Heart right ventricle (tissue), 16 donors: ENCODE measurements at regions of chr14 and their contacts with region 1.

Region 1: DNA sequence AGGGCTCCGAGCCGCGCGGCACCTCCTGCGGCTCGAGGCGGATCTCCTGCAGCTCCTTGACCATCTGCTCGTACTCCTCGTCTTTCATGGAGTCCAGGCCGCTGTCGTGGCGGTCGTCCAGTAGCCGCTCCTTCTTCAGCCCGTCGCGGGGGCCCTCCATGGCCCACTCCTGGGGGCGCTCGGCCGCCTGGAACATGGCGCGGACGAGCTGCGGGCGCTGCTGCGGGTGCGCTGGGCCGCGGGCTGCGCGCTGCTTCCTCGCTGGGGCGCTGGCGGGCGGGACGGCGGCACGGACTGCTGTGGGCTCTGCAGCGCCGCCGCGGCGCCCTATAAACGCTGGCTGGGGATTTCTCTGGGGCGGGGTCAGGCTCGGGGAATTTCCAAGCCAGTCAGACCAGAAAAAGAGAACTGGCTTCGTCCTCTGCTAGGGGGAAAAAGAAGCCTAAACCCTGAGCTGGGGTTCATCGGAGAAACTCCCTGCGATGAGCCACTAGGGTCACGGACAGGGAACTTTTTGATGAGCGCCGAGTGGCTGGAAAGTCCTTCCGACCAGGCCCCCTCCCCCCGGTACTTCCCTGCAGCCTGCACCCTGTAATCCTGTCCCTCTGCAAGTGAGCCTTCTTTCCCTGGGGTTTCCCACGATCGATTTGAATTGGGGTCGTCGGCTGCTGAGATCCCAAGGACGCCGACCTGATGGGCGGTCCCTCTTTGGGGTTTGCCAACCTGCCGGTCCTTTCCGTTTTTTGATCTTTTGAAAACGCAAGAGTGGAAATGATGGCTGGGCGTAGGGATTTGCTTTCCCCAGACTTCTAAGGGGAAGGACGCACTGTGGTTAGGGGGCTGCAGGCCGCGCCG is at the start of gene NFKBIA:
- DNase-seq: peak; percentile 92 to 94
- ATAC-seq: peak; percentile 67 to 80 (median 73)
- H3K4me3 ChIP-seq: peak within 1 kb of the TSS; percentile 64 to 93 (median 80)
- H3K27ac ChIP-seq: peak within 1 kb of the TSS; percentile 99 to 100 (median 100)
- H3K4me1 ChIP-seq: peaks cover 5 to 86% (median 61%) of the 10 kb centered on the region in 9 donors
- H3K27me3 ChIP-seq: no peaks in the 10 kb centered on the region
- CTCF ChIP-seq: peak in 7 of 9 donors; percentile 15 to 64 (median 39)
- total RNA-seq, gene NFKBIA: 41.0 to 98.5 (median 58.7) TPM

Region 2: DNA sequence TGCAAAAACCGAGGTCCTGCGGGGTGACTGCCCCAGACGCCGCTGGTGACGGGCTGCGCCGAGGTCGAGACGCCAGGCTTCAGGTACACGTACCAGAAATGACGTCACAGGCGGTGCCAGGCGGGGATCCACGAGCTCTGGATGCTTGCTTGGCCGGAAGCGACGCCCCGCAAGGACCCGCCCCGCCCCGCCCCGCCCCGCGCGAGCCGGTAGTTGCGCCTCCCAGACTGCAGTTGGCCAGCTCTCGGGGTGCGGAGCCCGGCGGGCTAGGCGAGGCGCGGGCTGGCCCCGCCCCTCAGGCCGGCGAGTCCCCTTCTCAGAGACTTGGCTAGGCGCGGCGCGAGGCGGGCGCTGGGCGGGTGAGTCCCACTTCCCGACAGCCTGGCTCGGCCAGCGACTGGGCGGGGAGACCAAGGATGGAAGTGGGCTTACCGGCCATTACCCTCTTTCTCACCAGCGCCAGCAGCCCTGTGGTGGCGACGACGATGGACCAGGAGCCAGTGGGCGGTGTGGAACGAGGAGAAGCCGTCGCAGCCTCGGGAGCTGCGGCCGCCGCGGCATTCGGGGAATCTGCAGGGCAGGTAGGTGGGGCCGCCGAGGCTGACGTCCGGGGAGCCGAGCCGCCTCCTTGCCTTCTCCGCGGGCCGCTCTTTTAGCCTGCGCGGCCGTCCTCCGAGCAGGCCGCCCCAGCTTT is 358.5 kb before region 1 on chr14 and contains the start of gene FAM177A1:
- intact Hi-C with region 1: loop called in 1 of 10 experiments (anchors 5 kb)
- DNase-seq: peak; percentile 98 to 99
- ATAC-seq: peak; percentile 97 to 99 (median 98)
- H3K4me3 ChIP-seq: peak within 1 kb of the TSS; percentile 66 to 96 (median 81)
- H3K27ac ChIP-seq: peak within 1 kb of the TSS; percentile 92 to 99 (median 96)
- H3K4me1 ChIP-seq: peaks cover 4 to 53% (median 33%) of the 10 kb centered on the region in 9 donors
- H3K27me3 ChIP-seq: no peaks in the 10 kb centered on the region
- CTCF ChIP-seq: no peak
- total RNA-seq, gene FAM177A1: 68.1 to 122 (median 104) TPM

Region 3: GRCh38 chr14:35215110-35215876 is 189.4 kb before region 1 on chr14:
- intact Hi-C with region 1: loop called in 3 of 10 experiments (anchors 1 to 5 kb)
- DNase-seq: peak in 1 of 2 donors; percentile 6
- ATAC-seq: peak in 5 of 8 donors; percentile 52 to 77 (median 64)
- H3K4me3 ChIP-seq: no peak overlapping the region
- H3K27ac ChIP-seq: peak overlapping the region in 4 of 10 donors; percentile 0 to 48 (median 29)
- H3K4me1 ChIP-seq: peaks cover 0 to 20% (median 0%) of the 10 kb centered on the region in 9 donors
- H3K27me3 ChIP-seq: no peaks in the 10 kb centered on the region
- CTCF ChIP-seq: peak; percentile 28 to 78 (median 56)

Region 4: DNA sequence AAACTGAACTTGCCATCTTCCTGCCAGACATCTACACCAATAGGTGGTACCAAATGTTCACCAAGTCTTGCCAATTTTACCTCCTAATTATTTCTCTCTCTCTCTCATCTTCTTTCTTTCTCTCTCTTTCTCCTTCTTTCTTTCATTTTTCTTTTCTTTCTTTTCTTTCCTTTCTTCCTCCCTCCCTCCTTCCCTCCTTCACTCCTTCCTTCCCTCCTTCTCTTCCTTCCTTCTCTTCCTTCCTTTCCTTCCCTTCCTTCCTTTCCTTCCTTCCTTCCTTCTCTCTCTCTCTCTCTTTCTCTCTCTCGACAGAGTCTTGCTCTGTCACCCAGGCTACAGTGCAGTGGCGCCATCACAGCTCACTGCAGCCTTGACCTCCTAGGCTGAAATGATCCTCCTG is 167.9 kb before region 1 on chr14:
- intact Hi-C with region 1: loop called in 2 of 10 experiments (anchors 5 kb)
- DNase-seq: no peak
- ATAC-seq: no peak
- H3K4me3 ChIP-seq: no peak overlapping the region
- H3K27ac ChIP-seq: no peak overlapping the region
- H3K4me1 ChIP-seq: peaks cover 0 to 30% (median 0%) of the 10 kb centered on the region in 9 donors
- H3K27me3 ChIP-seq: no peaks in the 10 kb centered on the region
- CTCF ChIP-seq: no peak

Region 5: DNA sequence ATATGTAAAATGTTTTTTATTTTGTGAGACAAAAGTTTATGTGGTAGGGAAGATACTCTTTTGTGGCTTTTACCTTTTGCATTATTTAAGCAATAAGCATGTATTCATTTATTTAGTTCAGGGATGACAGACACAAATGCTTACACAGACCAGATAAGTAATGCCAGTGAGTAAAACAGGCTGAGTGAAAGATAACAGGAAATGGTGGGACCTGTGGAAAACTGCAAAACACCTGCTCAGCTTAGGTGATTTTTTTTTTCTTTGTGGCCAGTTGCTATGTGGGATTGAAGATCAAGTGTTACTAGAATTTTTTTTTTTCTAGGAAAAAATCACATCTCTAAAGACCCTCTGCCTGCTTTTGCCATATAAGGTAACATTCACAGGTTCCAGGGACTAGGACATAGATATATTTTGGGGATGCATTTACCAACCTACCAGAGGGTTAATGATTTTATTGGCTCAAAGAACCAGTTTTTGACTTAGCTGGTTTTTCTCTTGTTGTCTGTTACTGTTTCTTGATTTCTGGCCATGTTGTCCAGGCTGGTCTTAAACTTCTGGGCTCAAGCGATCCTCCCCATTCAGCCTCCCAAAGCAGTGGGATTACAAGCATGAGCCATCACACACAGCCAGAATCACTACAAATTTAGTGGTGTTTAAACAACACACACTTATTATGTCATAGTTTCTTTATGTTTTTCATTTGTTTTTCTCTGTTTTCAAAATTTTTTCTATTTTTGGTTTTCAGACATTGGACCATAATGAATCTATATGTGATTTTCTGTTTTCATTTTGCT is 102.7 kb before region 1 on chr14:
- intact Hi-C with region 1: loop called in 1 of 10 experiments (anchors 10 kb)
- DNase-seq: no peak
- ATAC-seq: no peak
- H3K4me3 ChIP-seq: no peak overlapping the region
- H3K27ac ChIP-seq: peak overlapping the region in 2 of 10 donors; percentile 35 to 39
- H3K4me1 ChIP-seq: peaks cover 0 to 79% (median 37%) of the 10 kb centered on the region in 9 donors
- H3K27me3 ChIP-seq: no peaks in the 10 kb centered on the region
- CTCF ChIP-seq: no peak

Region 6: GRCh38 chr14:35385042-35385839 is 19.4 kb before region 1 on chr14:
- intact Hi-C with region 1: loop called in 1 of 10 experiments (anchors 1 kb)
- DNase-seq: peak; percentile 84 to 88
- ATAC-seq: peak; percentile 91 to 96 (median 94)
- H3K4me3 ChIP-seq: no peak overlapping the region
- H3K27ac ChIP-seq: peak overlapping the region; percentile 73 to 90 (median 86)
- H3K4me1 ChIP-seq: peaks cover 18 to 39% (median 30%) of the 10 kb centered on the region in 9 donors
- H3K27me3 ChIP-seq: no peaks in the 10 kb centered on the region
- CTCF ChIP-seq: no peak

Region 7: GRCh38 chr14:35553808-35554207 is 149.1 kb after region 1 on chr14:
- intact Hi-C with region 1: no loop called
- DNase-seq: no peak
- ATAC-seq: no peak
- H3K4me3 ChIP-seq: no peak overlapping the region
- H3K27ac ChIP-seq: no peak overlapping the region
- H3K4me1 ChIP-seq: peaks cover 0 to 7% (median 5%) of the 10 kb centered on the region in 9 donors
- H3K27me3 ChIP-seq: no peaks in the 10 kb centered on the region
- CTCF ChIP-seq: no peak

Region 8: GRCh38 chr14:35573911-35574310 is 169.2 kb after region 1 on chr14:
- intact Hi-C with region 1: no loop called
- DNase-seq: no peak
- ATAC-seq: no peak
- H3K4me3 ChIP-seq: no peak overlapping the region
- H3K27ac ChIP-seq: no peak overlapping the region
- H3K4me1 ChIP-seq: peaks cover 0 to 8% (median 0%) of the 10 kb centered on the region in 9 donors
- H3K27me3 ChIP-seq: no peaks in the 10 kb centered on the region
- CTCF ChIP-seq: no peak